ENCODE measurements at regions of chr2 and their contacts with region 1.

Region 1: DNA sequence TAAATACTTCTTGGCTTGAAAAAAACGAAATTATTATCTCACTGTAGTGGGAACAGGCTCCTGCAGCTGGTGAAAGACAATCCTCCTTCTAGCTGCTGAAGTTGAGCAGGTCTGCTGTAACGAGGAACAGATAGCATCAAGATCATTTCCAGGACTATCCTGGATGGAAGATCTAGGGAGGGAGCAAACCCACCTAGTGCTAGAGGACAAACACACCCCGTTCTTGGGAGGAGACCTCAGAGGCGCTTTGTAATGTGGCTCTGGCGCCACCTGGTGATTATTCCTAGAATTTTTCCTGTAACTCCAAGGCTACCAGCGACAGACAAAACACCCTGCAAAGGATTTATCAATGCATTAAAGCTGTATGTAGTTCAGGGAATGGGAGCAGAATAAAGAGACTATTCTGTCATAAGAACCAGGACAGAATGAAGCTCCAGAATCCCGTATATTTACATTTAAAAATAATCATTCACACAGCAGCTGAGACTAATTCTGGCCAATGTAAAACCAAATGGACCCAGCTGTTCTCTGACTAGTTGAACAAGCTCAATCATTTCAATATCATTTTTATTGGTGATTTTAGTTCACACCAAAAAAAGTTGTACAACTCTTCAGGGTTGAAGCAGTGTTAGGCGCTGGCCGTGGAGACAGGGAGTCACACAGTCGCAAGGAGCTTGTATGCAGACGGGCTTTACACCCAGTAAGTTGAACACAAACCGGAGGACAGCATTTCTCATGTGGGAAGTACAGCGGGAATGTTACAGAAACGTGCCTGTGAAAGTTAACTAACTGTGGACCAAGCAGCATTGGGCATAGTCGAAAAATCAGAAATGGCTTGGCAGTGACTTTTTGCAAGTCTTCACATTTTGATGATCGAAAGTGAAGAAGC is 290.3 kb downstream of the TRIB2 start:
- DNase-seq: peak; percentile 65
- ATAC-seq: peak; percentile 95
- H3K4me3 ChIP-seq: no peak overlapping the region
- H3K27ac ChIP-seq: no peak overlapping the region
- H3K4me1 ChIP-seq: 0 out of 2 replicates have a peak, but pooled peaks cover 2% of the 10 kb centered on the region
- H3K27me3 ChIP-seq: 0 out of 2 replicates have a peak, but pooled peaks cover 3% of the 10 kb centered on the region
- CTCF ChIP-seq: peak; percentile 82
- POLR2A ChIP-seq: 0 out of 2 replicates have a peak, but pooled peaks have one; percentile 30
- RAD21 ChIP-seq: peak; percentile 94

Region 2: DNA sequence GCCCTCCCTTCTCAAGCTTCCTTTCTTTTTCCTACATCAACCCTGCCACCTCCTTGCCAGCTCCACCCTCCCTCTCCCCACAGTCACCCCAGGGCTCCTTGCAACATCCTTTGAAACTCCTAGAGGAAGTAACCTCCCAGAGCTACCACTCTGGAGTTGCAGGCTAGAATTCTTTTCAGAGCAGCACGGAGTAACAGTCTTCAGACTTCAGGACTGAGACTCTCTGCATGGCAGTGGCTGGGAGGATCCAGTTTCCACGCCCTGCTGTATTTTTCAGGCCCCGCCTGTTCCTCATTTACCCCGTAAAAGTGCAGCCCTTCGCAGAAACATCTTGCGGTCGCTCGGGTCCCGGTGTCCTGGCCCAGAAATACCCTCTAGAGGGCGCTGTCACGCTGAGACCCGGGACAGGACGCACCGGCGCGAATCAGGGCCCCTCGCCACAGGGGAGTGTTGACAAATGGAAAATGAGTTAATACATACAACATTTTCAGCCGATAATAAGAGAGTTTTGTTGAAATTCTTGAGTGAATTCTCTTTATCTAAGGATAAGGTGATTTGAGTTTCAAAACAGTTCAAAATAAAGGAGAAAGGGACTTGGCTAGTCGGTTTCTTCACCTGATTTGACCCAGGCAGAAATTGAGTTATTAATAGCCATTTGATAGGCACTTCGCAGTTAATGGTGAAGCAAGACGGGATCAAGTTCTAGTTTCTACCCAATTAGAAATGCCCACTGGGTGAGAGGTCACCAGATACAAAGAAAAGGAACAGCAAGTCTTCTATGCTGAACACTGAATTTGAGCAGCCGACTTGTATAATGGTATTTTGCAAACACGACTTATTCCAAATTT is 1318.6 kb before region 1 on chr2:
- CTCF ChIA-PET with region 1: no interaction called
- POLR2A ChIA-PET with region 1: no interaction called
- dilution Hi-C with region 1: no loop called
- in situ Hi-C with region 1: no loop called
- intact Hi-C with region 1: loop called (anchors 5 kb)
- DNase-seq: peak; percentile 65
- ATAC-seq: peak; percentile 85
- H3K4me3 ChIP-seq: peak overlapping the region; percentile 6
- H3K27ac ChIP-seq: no peak overlapping the region
- H3K4me1 ChIP-seq: no peaks in the 10 kb centered on the region
- H3K27me3 ChIP-seq: peaks cover 23% of the 10 kb centered on the region
- CTCF ChIP-seq: peak; percentile 78
- POLR2A ChIP-seq: no peak
- RAD21 ChIP-seq: peak; percentile 68

Region 3: DNA sequence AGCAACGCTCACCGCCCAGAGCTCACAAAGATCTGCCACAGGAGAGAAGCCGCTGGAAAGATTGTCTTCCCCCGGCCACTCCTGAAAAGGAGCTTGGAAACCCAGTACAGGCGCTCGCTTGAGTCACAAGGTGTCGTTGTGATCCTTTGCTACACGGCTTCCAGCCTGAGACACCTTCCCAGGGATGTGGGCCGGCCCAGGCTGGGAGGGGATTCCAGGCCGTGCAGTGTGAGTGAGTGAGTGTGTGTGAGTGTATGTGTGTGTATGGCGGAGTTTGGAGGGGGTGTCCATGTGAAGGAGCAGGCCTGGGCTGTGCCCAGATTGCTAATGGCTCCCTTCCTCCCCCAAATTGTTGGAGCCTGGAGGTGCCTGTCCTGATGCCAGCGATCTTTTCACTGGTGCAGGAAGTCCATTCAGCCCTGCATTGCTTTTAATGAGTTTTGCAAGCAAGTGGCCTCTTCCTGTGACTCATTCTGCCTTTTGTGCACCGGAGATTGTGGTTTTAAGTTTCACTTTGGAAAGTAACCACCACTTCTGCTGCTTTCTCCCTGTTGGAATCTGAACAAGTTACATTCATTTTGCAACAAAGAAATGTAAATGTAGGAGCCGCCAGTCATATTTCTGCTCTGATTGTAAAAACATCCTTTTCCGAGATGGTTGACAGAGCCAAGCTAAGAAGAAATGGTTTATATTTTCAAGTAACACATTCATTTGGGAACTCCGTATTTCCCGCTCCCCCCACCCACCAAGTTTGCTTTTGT is 1176.9 kb before region 1 on chr2:
- CTCF ChIA-PET with region 1: interaction called, 11 read pairs
- POLR2A ChIA-PET with region 1: no interaction called
- dilution Hi-C with region 1: no loop called
- in situ Hi-C with region 1: loop called (anchors 10 kb)
- intact Hi-C with region 1: loop called (anchors 1 kb)
- DNase-seq: peak; percentile 98
- ATAC-seq: peak; percentile 83
- H3K4me3 ChIP-seq: peak overlapping the region; percentile 25; the same call in 1 of the 2 replicates
- H3K27ac ChIP-seq: peak overlapping the region; percentile 96
- H3K4me1 ChIP-seq: peaks cover 19% of the 10 kb centered on the region
- H3K27me3 ChIP-seq: no peaks in the 10 kb centered on the region
- CTCF ChIP-seq: peak; percentile 55
- POLR2A ChIP-seq: no peak
- RAD21 ChIP-seq: peak; percentile 68

Region 4: DNA sequence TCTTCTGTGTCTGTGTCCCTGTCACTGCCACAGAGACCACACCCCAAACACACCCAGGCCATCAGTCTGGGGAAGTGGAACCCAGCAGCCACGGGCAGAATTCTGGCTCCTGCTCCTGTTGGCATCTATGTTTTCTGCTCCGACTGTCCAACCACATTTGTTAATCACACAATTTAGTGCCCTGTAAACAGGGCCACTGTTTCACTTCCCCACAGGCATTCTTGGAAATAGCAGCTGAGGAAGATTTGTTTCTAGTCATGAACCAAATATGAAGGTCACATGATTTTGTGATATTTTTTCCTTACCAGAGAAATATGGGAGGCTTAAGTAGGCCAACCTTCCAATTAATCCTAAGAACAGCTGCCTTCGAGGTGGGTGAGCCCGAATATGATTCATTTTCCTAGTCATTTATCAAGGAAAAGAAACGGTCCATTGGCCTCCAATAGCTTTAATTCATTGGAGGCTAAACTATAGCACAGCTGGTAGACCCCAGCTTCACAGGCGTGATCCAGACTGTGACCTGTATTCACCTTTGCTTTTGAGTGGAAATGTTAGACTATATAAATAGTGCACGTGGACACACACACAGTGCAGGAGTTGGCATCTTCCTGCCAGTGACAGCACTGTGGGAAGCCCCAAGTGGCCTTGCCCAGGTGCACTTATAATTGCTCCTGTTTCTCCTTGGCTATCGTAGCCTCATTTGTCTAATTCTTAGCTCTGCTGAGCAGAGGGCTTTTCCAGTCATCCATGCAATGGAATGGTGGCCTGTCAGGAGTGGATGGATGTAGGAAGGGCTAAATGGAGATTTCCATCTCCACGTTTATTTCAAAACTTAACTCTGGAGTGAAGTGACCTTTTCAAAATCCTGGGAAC is 992.7 kb before region 1 on chr2:
- CTCF ChIA-PET with region 1: no interaction called
- POLR2A ChIA-PET with region 1: no interaction called
- dilution Hi-C with region 1: no loop called
- in situ Hi-C with region 1: no loop called
- intact Hi-C with region 1: loop called (anchors 10 kb)
- DNase-seq: peak; percentile 70
- ATAC-seq: peak; percentile 75
- H3K4me3 ChIP-seq: no peak overlapping the region
- H3K27ac ChIP-seq: peak overlapping the region; percentile 15; the same call in 1 of the 2 replicates
- H3K4me1 ChIP-seq: peaks cover 6% of the 10 kb centered on the region
- H3K27me3 ChIP-seq: no peaks in the 10 kb centered on the region
- CTCF ChIP-seq: no peak
- POLR2A ChIP-seq: no peak
- RAD21 ChIP-seq: no peak

Region 5: GRCh38 chr2:12176623-12177454 is 830.2 kb before region 1 on chr2:
- CTCF ChIA-PET with region 1: interaction called, 3 read pairs
- POLR2A ChIA-PET with region 1: no interaction called
- dilution Hi-C with region 1: no loop called
- in situ Hi-C with region 1: no loop called
- intact Hi-C with region 1: loop called (anchors 5 kb)
- DNase-seq: peak; percentile 76
- ATAC-seq: peak; percentile 87
- H3K4me3 ChIP-seq: no peak overlapping the region
- H3K27ac ChIP-seq: no peak overlapping the region; the same call in 1 of the 2 replicates
- H3K4me1 ChIP-seq: peaks cover 11% of the 10 kb centered on the region
- H3K27me3 ChIP-seq: no peaks in the 10 kb centered on the region
- CTCF ChIP-seq: no peak
- POLR2A ChIP-seq: no peak
- RAD21 ChIP-seq: no peak

Region 6: DNA sequence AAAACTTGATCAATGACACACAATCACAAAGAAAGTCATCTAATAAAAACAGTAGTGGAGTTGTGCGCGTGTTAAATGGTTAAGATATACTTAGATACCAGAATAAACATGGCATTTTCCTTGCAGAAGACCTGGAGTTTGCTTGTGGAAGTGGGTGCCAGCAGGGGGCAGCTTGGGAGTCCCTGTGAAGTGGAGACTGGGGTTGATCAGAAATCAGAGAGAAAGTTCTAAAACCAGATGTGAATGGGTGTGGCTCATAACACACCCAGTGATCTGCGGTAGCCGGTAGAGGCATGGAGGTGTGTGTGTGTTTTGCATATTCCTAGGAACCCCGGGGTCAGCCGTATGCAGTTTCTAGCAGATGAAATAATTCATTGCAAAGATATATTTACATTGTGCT is 590.5 kb before region 1 on chr2:
- CTCF ChIA-PET with region 1: no interaction called
- POLR2A ChIA-PET with region 1: no interaction called
- dilution Hi-C with region 1: no loop called
- in situ Hi-C with region 1: no loop called
- intact Hi-C with region 1: loop called (anchors 5 kb)
- DNase-seq: peak; percentile 48
- ATAC-seq: peak; percentile 63
- H3K4me3 ChIP-seq: no peak overlapping the region
- H3K27ac ChIP-seq: peak overlapping the region; percentile 20; the same call in 1 of the 2 replicates
- H3K4me1 ChIP-seq: peaks cover 8% of the 10 kb centered on the region
- H3K27me3 ChIP-seq: no peaks in the 10 kb centered on the region
- CTCF ChIP-seq: peak; percentile 53
- POLR2A ChIP-seq: no peak
- RAD21 ChIP-seq: peak; percentile 62

Region 7: DNA sequence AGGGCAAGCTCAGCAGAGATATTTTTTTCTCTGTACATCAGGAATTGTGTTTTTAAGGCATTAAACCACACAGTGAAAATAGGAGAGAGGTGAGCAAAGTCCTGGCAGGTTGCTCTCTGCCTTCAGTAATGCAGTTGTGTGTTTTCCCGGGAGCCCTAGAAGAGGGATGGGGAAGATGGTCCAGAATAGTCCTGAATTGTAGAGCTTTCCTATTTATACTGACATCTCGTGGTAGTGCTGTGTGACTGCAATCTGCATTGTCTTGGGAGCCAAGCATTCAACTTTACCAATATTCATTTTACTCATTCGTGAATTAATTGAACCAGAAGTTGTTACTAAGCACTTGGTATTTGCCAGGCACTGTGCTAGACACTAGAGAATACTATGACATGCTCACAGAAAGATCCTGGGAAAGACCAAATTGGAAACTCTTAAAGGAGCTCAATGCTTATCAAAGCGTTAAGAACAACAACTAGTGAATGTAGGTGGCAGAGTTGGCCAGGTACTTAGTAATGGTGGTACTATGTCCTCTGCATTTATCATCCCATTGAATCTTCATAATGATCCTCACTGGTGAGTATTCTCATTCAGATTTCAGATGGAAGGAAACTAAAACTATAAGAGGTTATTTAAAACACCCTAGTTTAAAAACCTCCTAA is 75.8 kb before region 1 on chr2:
- CTCF ChIA-PET with region 1: interaction called, 3 read pairs
- POLR2A ChIA-PET with region 1: no interaction called
- dilution Hi-C with region 1: no loop called
- in situ Hi-C with region 1: no loop called
- intact Hi-C with region 1: loop called (anchors 1 kb)
- DNase-seq: peak; percentile 63
- ATAC-seq: peak; percentile 93
- H3K4me3 ChIP-seq: no peak overlapping the region
- H3K27ac ChIP-seq: no peak overlapping the region
- H3K4me1 ChIP-seq: peaks cover 10% of the 10 kb centered on the region
- H3K27me3 ChIP-seq: no peaks in the 10 kb centered on the region
- CTCF ChIP-seq: peak; percentile 90
- POLR2A ChIP-seq: 0 out of 2 replicates have a peak, but pooled peaks have one; percentile 29
- RAD21 ChIP-seq: peak; percentile 93

Region 8: GRCh38 chr2:13040043-13040442 is 33.0 kb after region 1 on chr2:
- CTCF ChIA-PET with region 1: no interaction called
- POLR2A ChIA-PET with region 1: no interaction called
- dilution Hi-C with region 1: no loop called
- in situ Hi-C with region 1: no loop called
- intact Hi-C with region 1: no loop called
- DNase-seq: no peak
- ATAC-seq: no peak
- H3K4me3 ChIP-seq: no peak overlapping the region
- H3K27ac ChIP-seq: no peak overlapping the region
- H3K4me1 ChIP-seq: no peaks in the 10 kb centered on the region
- H3K27me3 ChIP-seq: no peaks in the 10 kb centered on the region
- CTCF ChIP-seq: no peak
- POLR2A ChIP-seq: no peak
- RAD21 ChIP-seq: no peak